ENCODE measurements at regions of chr5 and their contacts with region 1.

Region 1: DNA sequence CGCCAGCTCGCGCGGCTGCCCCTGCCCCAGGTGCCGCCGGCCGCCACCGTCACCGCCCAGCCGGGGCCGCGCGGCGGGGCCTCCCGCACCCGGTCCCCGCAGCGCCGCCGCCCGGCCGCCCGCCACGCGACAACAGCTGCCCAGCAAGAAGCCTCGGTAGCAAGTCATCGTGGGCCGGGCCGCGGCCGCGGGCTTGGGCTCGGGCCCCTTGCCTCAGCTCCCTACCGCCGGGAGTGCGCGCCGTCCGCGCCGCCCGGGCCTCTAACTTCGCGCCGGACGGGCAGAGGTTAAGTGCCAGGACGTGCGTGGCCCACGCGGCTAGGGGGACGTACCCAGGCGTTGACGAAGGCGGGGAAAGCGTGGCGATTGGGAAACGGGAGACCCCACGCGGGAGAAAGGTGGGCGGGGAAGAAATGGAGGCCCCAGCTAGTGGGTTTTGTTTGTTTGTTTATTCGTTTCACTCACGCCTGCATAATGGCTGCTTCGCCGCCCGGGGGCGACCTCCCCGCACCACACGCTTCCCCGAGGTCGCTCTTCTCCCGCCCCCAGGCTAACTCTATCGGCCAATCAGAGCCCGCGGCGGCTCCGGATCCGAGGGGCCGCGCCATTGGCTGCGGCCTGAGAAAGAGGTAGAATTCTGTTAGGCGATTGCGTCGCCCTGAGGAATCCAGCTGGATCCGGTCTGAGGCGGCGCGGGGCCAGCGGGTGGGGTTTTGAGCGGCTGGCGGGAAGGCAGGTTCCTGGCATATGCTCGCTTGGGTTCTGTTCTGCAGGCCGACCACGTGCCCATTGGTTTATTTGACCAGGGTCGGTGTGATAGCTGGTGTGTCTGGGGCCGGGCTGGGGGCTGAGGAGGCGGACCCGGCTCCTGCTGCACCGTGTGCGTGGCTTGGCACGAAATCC is at the start of gene NADK2:
- DNase-seq: peak; percentile 92
- H3K4me3 Mint-ChIP-seq: peak within 1 kb of the TSS; percentile 82
- H3K27ac Mint-ChIP-seq: peak within 1 kb of the TSS; percentile 94
- H3K4me1 Mint-ChIP-seq: peaks cover 28% of the 10 kb centered on the region
- H3K27me3 Mint-ChIP-seq: peaks cover 12% of the 10 kb centered on the region
- total RNA-seq, gene NADK2: 17.8 and 19.4 TPM in 2 replicates

Region 2: DNA sequence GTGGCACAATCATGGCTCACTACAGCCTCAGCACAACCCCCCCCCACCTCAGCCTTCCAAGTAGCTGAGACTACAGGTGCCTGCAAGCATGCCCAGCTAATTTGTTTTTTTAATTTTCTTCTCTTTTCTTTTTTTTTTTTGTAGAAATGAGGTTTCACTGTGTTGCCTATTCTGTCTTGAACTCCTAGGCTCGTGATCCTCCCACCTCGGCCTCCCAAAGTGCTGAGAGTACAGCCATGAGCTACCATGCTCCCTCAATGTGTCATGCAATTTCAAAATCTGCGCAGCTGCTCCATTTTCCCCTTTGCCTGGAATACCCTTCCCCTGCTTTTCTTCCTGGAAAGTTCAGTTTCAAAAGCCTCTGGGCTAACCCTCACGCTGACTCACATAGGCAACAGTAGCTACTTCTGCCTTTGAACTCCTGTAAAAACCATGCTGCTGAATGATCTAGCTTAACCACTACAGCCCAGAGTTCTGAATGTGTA is 456.2 kb before region 1 on chr5:
- intact Hi-C with region 1: loop called (anchors 10 kb)
- DNase-seq: no peak
- H3K4me3 Mint-ChIP-seq: no peak overlapping the region
- H3K27ac Mint-ChIP-seq: peak overlapping the region; percentile 85
- H3K4me1 Mint-ChIP-seq: peaks cover 66% of the 10 kb centered on the region
- H3K27me3 Mint-ChIP-seq: no peaks in the 10 kb centered on the region

Region 3: DNA sequence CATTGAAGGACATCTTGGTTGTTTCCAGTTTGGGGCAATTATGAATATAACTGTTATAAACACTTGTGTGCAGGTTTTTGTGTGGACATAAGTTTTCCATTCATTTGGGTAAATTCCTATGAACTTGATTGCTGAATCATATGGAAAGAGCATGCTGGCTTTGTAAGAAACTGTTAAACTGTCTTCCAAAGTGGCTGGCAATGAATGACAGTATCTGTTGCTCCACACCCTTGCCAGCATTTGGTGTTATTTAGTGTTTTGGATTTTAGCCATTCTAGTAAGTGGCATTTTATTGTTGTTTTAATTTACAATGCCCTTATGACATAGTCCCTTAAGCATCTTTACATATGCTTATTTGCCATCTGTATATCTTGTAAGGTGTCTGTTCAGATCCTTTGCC is 145.4 kb before region 1 on chr5:
- intact Hi-C with region 1: no loop called
- DNase-seq: no peak
- H3K4me3 Mint-ChIP-seq: no peak overlapping the region
- H3K27ac Mint-ChIP-seq: no peak overlapping the region
- H3K4me1 Mint-ChIP-seq: no peaks in the 10 kb centered on the region
- H3K27me3 Mint-ChIP-seq: no peaks in the 10 kb centered on the region

Region 4: DNA sequence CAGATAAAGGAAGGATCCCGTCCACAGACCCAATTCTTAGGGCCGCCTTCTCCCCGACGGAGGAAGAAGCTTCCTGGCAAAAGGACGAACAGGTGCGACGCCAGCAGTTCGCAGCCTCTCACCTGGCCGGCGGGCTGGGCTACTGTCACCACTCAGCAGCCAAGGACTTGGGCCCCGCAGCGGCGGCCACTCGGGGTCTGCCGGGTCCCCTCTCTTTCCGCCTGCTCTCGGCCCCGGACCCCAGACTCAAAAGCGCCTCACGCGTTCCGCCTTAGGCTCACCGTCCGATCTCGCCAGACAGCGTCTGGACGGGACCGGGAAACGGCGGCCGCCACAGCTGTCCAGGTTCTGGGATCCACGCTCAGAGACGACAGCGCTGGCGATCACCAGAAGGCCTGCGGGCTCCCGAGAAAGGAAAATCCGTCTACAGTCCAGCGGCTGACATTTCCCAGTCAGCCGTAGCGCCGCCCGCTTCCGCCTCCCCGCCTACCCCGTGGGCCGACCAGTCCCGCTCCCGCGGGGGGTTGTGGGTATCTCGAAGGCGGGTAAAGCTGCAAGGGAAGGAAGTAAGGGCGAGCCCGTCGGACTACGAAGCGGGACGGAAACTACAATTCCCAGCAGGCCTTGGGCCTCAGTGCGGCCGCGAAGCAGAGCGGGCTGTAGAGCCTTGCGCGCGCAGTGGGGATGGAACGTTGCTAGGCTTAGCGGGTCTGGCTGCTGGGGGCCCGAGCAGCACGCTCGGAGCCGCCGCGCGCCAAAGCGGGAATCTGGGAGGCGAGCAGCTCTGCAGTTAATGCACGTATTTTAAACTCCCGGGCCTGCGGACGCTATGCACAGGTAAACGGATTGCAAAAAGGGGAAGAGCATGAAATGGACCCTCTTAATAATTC is 90.2 kb before region 1 on chr5 and contains the starts of genes LMBRD2 and SKP2:
- intact Hi-C with region 1: loop called (anchors 1 kb)
- DNase-seq: peak; percentile 97
- H3K4me3 Mint-ChIP-seq: peak within 1 kb of the TSS; percentile 95
- H3K27ac Mint-ChIP-seq: peak within 1 kb of the TSS; percentile 88
- H3K4me1 Mint-ChIP-seq: peaks cover 44% of the 10 kb centered on the region
- H3K27me3 Mint-ChIP-seq: no peaks in the 10 kb centered on the region
- total RNA-seq, gene LMBRD2: 9.3 and 11.6 TPM in 2 replicates
- total RNA-seq, gene SKP2: 56.6 and 58.9 TPM in 2 replicates

Region 5: GRCh38 chr5:36346896-36347690 is 105.2 kb after region 1 on chr5:
- intact Hi-C with region 1: no loop called
- DNase-seq: no peak
- H3K4me3 Mint-ChIP-seq: no peak overlapping the region
- H3K27ac Mint-ChIP-seq: no peak overlapping the region
- H3K4me1 Mint-ChIP-seq: no peaks in the 10 kb centered on the region
- H3K27me3 Mint-ChIP-seq: peaks cover 5% of the 10 kb centered on the region

Measured in activated T-helper 2 cell treated with anti-CD3 and anti-CD28 coated beads, Interferon-gamma antibody, Interleukin-2, Interleukin-4, amounts not matched to agents 10 μg/mL and 5 μg/mL and 100 μg/mL, durations not matched to agents 14 hours and 24 hours and 36 hours (primary cell).